GM18951 (cell line): ENCODE measurements at regions of chr10 and their contacts with region 1.

Region 1: GRCh38 chr10:89563861-89564478 is 28.6 kb upstream of the SLC16A12 start:
- POLR2A ChIP-seq: no peak

Region 2: DNA sequence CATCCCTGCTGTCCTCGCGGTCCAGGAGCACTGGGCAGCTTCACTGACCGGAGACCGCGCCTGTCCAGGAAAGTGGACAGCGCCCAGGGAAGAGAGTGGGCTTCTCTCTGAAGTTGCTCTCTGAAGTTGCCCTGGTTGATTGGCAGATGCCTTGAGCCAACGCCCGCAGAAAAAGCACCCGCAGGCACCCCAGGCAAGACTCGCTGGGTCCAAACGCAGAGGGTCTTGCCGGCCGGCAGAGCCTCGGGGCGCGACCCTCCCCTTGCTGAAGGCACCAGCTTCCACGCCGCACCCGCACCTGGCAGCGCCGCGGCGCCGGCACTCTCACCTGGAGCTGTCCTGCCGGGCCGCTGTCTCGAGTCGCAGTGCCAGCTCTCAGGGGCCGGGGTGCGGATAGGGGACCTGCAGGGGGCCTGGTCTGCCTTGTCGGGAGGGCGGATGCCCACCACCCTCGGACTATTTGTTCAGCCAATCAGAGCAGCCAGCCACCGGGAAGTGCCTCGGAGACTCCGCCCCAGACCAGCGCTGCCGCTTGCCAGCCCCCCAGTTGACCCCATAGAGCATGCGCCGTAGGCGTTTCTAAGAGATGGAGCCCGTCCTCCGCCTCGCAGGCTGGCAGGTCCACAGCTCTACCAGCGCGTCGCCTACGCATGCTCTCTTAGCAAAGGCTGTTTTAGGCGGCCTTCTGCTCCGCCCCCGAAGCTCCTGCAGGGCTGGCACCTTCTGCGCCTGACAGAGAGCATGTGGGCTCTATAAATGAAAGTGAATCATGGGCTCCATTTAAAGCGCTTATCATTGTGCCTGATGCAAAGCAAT is 312.4 kb before region 1 on chr10 and contains the start of gene LIPA:
- in situ Hi-C with region 1: loop called (anchors 10 kb)
- POLR2A ChIP-seq: peak; percentile 90

Region 3: GRCh38 chr10:89426230-89426868 is 137.6 kb before region 1 on chr10:
- in situ Hi-C with region 1: loop called (anchors 5 kb)
- POLR2A ChIP-seq: no peak

Region 4: DNA sequence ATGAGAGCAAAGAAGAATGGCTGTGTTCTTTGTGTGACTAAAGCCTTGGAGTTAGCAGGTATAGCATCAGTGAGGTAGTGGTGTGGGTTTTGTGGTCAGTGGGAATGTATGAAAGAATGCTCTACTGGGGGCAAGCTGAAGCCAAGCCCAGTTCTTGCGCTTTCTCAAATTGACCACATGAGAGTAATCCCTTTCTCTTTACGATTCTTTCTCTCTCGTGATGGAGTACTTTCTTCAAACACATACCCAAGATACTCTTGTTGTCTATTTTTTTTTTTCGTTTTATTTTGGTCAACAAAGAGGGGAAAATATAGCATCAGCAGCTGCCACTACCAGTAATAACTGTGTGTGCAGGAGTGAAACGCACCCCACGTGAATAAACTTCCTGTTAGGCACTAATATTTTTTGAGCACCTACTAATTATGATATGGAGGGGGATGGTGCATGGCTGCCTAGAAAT is 89.5 kb after region 1 on chr10:
- in situ Hi-C with region 1: no loop called
- POLR2A ChIP-seq: no peak